ENCODE measurements at regions of chr14 and their contacts with region 1.

Region 1: DNA sequence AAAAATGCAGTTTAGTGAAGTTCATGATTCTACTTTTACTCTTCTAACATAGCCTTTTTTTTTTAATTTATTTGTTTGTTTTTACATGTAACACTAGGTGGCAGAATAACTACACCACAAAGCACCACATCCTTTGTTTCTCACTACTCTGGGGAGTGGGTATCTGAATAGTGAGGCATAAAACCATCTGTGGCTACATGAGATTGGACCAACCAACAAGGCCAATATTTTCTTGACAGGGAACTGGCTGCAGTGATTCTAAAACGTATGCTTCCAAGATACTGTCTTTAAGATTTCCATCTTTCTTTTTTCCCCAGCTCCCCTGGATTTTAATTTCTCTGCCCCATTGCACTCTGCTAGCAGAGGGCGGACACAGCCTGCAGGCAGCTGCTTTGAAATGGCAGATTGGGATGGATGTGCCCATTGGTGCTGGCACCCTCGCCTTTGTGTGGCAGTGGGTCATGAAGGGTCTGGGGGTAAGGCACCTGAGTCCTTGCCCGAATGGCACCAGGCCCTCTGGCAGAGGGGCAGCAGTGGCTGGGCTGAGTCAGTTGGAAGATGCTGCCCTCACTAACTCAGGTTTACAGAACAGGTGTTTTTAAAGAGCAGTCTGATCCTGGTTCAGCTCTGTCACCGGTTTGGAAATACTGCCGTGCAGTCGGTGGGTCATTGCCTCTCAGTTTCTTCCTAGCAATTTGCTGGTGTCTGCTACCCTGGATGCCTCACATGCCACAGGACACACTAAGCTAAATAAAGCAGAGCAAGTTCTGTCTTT is 429.1 kb downstream of the RAD51B start:
- DNase-seq: peak; percentile 71
- ATAC-seq: 0 out of 2 replicates have a peak, but pooled peaks have one; percentile 6
- H3K4me3 ChIP-seq: no peak overlapping the region
- H3K27ac ChIP-seq: peak overlapping the region; percentile 82
- H3K4me1 ChIP-seq: peaks cover 65% of the 10 kb centered on the region
- H3K27me3 ChIP-seq: no peaks in the 10 kb centered on the region
- CTCF ChIP-seq: peak; percentile 85

Region 2: DNA sequence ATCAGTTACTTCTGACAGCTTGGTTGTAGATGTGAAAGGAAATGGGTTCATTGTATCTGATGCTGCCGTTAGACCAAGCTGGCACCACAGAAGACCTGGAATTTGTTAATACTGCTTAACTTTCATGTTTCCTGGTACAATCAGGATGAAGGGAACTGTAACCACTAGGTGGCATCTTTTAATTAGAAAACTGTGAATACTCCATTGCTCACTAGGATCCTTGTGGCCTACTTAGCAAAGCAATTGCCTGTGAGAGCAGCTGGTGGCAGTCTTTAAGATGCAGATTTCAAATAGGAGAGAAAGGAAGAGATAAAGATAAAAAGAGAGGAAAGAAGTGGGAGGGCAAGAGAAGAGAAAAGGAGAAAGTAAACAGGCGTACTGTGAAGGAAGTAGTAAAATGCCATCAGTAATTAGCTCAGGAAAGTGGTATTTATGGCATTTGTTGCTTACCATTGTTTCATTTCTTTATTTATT is 314.6 kb before region 1 on chr14:
- CTCF ChIA-PET with region 1: interaction called, 4 read pairs
- POLR2A ChIA-PET with region 1: interaction called, 4 read pairs
- intact Hi-C with region 1: loop called (anchors 2 kb)
- DNase-seq: peak; percentile 88
- ATAC-seq: peak; percentile 99
- H3K4me3 ChIP-seq: no peak overlapping the region
- H3K27ac ChIP-seq: no peak overlapping the region
- H3K4me1 ChIP-seq: no peaks in the 10 kb centered on the region
- H3K27me3 ChIP-seq: no peaks in the 10 kb centered on the region
- CTCF ChIP-seq: peak; percentile 96

Region 3: DNA sequence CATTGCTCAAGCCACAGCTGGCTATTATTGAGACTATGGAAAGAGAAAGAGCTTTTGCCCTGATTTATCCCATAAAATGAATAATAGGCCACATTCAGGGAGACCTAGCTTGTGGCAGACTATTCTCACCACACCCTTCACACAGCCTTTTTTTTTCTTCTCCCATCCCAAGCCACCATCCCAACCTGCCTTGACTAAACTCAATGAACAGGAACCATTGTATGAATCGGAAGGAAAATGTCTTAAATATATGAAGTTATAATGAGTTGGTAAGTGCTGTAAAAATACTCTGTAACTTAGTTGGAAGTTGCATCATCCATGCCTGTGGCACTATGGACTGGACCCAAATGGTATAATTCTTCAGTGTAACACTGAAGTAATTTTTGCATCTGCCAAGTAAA is 90.7 kb before region 1 on chr14:
- CTCF ChIA-PET with region 1: interaction called, 4 read pairs
- POLR2A ChIA-PET with region 1: interaction called, 3 read pairs
- intact Hi-C with region 1: loop called (anchors 1 kb)
- DNase-seq: peak; percentile 61
- ATAC-seq: peak; percentile 78
- H3K4me3 ChIP-seq: no peak overlapping the region
- H3K27ac ChIP-seq: peak overlapping the region; percentile 66
- H3K4me1 ChIP-seq: peaks cover 17% of the 10 kb centered on the region
- H3K27me3 ChIP-seq: no peaks in the 10 kb centered on the region
- CTCF ChIP-seq: no peak

Region 4: GRCh38 chr14:68359837-68360552 is 111.3 kb after region 1 on chr14:
- CTCF ChIA-PET with region 1: no interaction called
- POLR2A ChIA-PET with region 1: interaction called, 5 read pairs
- intact Hi-C with region 1: loop called (anchors 5 kb)
- DNase-seq: peak; percentile 28
- ATAC-seq: peak; percentile 62
- H3K4me3 ChIP-seq: no peak overlapping the region
- H3K27ac ChIP-seq: no peak overlapping the region
- H3K4me1 ChIP-seq: peaks cover 29% of the 10 kb centered on the region
- H3K27me3 ChIP-seq: no peaks in the 10 kb centered on the region
- CTCF ChIP-seq: no peak

Region 5: GRCh38 chr14:68466491-68467032 is 217.9 kb after region 1 on chr14:
- CTCF ChIA-PET with region 1: no interaction called
- POLR2A ChIA-PET with region 1: no interaction called
- intact Hi-C with region 1: loop called (anchors 2 kb)
- DNase-seq: peak; percentile 96
- ATAC-seq: peak; percentile 34
- H3K4me3 ChIP-seq: no peak overlapping the region; the same call in 1 of the 2 replicates
- H3K27ac ChIP-seq: peak overlapping the region; percentile 55
- H3K4me1 ChIP-seq: peaks cover 59% of the 10 kb centered on the region
- H3K27me3 ChIP-seq: no peaks in the 10 kb centered on the region
- CTCF ChIP-seq: no peak

Region 6: DNA sequence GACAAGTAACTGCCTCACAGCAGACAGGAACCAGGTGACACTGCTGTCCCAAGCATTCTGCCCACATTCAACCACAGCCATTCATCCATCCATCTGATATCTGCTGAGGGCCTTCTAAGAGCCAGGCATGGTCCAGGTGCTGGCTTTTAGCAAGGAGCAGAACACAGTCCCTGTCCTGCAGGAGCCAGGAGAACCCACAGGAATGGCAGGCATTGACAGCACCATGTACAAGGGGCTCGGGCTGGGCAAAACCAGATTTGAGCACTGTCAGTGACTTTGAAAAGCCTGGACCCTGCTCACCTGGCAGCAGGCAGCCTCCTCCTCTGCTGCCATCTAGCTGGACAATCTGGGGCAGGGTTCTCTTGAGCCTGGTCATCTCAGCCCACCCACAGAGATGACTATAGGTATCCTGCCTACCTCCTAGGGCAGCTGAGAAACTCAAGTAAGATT is 407.3 kb after region 1 on chr14:
- CTCF ChIA-PET with region 1: no interaction called
- POLR2A ChIA-PET with region 1: no interaction called
- intact Hi-C with region 1: loop called (anchors 5 kb)
- DNase-seq: peak; percentile 52
- ATAC-seq: peak; percentile 90
- H3K4me3 ChIP-seq: no peak overlapping the region
- H3K27ac ChIP-seq: no peak overlapping the region
- H3K4me1 ChIP-seq: no peaks in the 10 kb centered on the region
- H3K27me3 ChIP-seq: no peaks in the 10 kb centered on the region
- CTCF ChIP-seq: peak; percentile 56; the same call in 1 of the 2 replicates

Region 7: GRCh38 chr14:68816262-68816942 is 567.7 kb after region 1 on chr14:
- CTCF ChIA-PET with region 1: interaction called, 14 read pairs
- POLR2A ChIA-PET with region 1: interaction called, 4 read pairs
- intact Hi-C with region 1: loop called (anchors 1 kb)
- DNase-seq: peak; percentile 92
- ATAC-seq: peak; percentile 90
- H3K4me3 ChIP-seq: peak overlapping the region; percentile 60
- H3K27ac ChIP-seq: peak overlapping the region; percentile 83
- H3K4me1 ChIP-seq: peaks cover 22% of the 10 kb centered on the region
- H3K27me3 ChIP-seq: no peaks in the 10 kb centered on the region
- CTCF ChIP-seq: peak; percentile 97

Measured in PC-3 (cell line).